H1 (cell line): ENCODE measurements at regions of chr15 and their contacts with region 1.

Region 1: DNA sequence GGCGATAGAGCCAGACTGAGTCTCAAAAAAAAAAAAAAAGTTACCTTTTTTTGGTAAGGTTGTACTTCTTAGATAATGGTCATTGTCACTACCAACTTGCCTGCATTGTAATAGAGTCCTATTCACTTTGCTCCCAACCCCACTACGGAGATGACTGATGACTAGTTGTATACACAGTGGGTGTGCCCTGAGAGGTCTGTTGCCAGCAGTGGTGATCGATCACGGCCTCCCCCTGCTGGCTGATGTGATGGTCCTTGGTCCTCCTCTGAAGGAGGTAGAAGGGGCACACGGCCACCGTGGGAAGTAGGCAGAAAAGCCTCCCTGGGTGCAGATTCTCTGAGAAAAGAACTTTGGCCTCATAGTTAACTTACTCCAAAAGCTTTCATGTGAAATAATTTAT is 10.7 kb downstream of the GCNT3 start:
- DNase-seq: peak; percentile 21 to 66
- H3K4me3 ChIP-seq: no peak overlapping the region
- H3K27ac ChIP-seq: no peak overlapping the region
- H3K4me1 ChIP-seq: no peaks in the 10 kb centered on the region
- H3K27me3 ChIP-seq: no peaks in the 10 kb centered on the region
- CTCF ChIP-seq: peak; percentile 66 to 77 (median 67)
- EP300 ChIP-seq: no peak
- POLR2A ChIP-seq: no peak
- RAD21 ChIP-seq: peak; percentile 59 to 73

Region 2: DNA sequence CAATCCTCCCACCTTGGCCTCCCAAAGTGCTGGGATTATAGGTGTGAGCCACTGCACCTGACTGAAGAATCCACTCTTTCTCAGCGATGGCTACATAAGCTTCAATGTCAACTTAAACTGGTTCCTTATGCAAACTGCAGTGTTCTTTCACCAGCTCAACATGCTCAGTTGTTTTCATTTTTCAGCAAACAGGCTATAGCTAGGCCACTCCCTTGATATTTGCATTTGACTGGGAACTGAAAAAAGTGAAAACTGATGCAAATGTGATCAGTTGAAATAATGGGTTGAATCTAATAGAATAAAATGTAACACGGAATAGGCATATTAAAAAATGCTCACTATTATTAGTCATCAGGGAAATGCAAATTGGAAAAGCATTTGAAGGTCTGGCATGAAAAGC is 84.9 kb before region 1 on chr15:
- CTCF ChIA-PET with region 1: interaction called, 40 read pairs
- POLR2A ChIA-PET with region 1: no interaction called
- DNase-seq: no peak
- H3K4me3 ChIP-seq: no peak overlapping the region
- H3K27ac ChIP-seq: no peak overlapping the region
- H3K4me1 ChIP-seq: no peaks in the 10 kb centered on the region
- H3K27me3 ChIP-seq: no peaks in the 10 kb centered on the region
- CTCF ChIP-seq: no peak
- EP300 ChIP-seq: no peak
- POLR2A ChIP-seq: no peak
- RAD21 ChIP-seq: no peak

Region 3: DNA sequence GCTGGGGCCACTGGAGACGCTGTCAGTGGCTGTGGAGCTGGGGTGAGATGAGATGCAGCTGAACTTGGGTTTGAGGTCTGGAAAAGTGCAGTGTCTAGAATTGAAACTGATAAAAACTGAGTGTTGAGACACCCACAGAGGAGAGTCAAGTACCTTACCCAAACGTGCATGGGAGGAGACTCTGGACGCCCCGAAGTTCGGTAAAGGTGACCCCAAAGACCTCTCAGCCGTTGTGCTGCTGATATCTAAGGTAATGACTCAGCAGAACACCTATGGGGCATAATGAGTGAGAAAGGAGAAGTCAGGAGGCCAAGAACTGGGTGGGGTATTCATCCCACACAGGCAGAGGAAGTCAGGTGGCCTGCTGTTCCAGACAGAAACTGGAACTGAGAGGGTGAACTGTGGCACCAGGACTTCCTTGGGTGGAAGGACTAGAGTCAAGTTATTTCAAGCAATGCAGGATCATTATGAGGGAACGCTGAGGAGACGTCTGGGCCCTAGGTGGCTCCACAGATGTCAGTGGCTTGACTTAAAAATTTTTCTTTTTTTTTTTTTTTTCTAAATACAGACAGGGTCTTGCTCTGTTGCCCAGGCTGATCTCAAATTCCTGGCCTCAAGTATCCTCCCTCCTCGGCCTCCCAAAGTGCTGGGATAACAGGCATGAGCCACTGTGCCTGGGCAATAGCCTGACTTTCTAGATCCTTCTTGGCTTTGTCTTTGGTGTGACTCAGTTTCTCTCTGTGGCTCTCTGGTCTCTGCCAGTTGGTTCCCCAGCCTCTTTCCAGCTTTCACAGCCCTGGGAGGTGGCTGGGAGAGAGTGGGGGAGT is 78.4 kb before region 1 on chr15:
- CTCF ChIA-PET with region 1: interaction called, 10 read pairs
- POLR2A ChIA-PET with region 1: no interaction called
- DNase-seq: no peak
- H3K4me3 ChIP-seq: no peak overlapping the region
- H3K27ac ChIP-seq: no peak overlapping the region
- H3K4me1 ChIP-seq: peaks cover 0 to 5% (median 1%) of the 10 kb centered on the region in 4 experiments; a peak in 2 of 7 replicates
- H3K27me3 ChIP-seq: peaks cover 0 to 30% (median 18%) of the 10 kb centered on the region in 4 experiments; a peak in 5 of 7 replicates
- CTCF ChIP-seq: no peak
- EP300 ChIP-seq: no peak
- POLR2A ChIP-seq: no peak
- RAD21 ChIP-seq: no peak

Region 4: DNA sequence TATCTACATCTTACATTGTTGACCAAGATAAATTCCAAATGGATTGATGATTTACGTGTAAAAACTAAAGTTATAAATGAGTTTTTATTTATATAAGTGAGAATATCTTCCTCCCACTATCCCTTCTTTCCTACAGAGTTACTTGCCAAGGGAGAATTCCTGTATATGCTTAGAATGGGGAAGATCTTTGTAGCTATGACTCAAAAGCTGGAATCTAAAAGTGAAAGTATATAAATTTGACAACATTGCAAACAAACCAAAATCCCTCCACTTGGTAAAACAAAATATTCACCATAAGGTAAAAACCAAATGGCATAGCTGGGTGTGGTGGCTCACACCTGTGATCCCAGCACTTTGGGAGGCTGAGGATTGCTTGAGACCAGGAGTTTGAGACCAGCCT is 63.4 kb before region 1 on chr15:
- CTCF ChIA-PET with region 1: no interaction called
- POLR2A ChIA-PET with region 1: no interaction called
- DNase-seq: no peak
- H3K4me3 ChIP-seq: no peak overlapping the region
- H3K27ac ChIP-seq: no peak overlapping the region
- H3K4me1 ChIP-seq: no peaks in the 10 kb centered on the region
- H3K27me3 ChIP-seq: no peaks in the 10 kb centered on the region
- CTCF ChIP-seq: no peak
- EP300 ChIP-seq: no peak
- POLR2A ChIP-seq: no peak
- RAD21 ChIP-seq: no peak

Region 5: DNA sequence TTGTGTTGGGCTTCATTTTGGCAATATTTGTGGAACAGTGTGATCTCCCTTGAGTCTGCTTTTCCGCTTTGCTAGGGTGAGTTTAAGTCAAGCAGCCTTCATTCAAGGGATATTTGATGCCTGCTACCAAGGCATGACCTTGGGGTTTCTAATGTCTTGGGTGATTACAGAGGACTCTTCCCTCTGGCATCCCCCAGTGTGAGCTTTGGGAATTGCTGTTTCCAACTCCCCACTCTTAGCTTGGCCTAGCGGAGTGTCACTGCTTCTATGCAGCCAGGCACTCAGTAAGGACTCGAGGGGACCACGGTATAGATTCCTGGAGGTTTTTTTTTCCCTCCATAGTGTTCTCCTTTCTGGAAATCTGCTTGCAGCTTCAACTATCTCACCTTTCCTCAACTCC is 10.4 kb after region 1 on chr15:
- CTCF ChIA-PET with region 1: interaction called, 11 read pairs
- POLR2A ChIA-PET with region 1: no interaction called
- DNase-seq: peak; percentile 33 to 64
- H3K4me3 ChIP-seq: no peak overlapping the region
- H3K27ac ChIP-seq: no peak overlapping the region
- H3K4me1 ChIP-seq: no peaks in the 10 kb centered on the region
- H3K27me3 ChIP-seq: no peaks in the 10 kb centered on the region
- CTCF ChIP-seq: peak; percentile 58 to 81 (median 81)
- EP300 ChIP-seq: no peak
- POLR2A ChIP-seq: no peak
- RAD21 ChIP-seq: peak; percentile 80 to 86